Right lobe of liver (tissue), 6 donors: ENCODE measurements at regions of chr7 and their contacts with region 1.

Region 1: GRCh38 chr7:102390697-102391484 is 5.3 kb upstream of the PRKRIP1 start:
- DNase-seq: peak; percentile 84 to 87 (median 85)
- ATAC-seq: peak; percentile 94 to 98 (median 98)
- H3K4me3 ChIP-seq: no peak overlapping the region
- H3K27ac ChIP-seq: no peak overlapping the region
- H3K4me1 ChIP-seq: peaks cover 0 to 4% (median 0%) of the 10 kb centered on the region in 4 donors
- H3K27me3 ChIP-seq: no peaks in the 10 kb centered on the region
- CTCF ChIP-seq: peak; percentile 91 to 98 (median 93)
- POLR2A ChIP-seq: no peak

Region 2: DNA sequence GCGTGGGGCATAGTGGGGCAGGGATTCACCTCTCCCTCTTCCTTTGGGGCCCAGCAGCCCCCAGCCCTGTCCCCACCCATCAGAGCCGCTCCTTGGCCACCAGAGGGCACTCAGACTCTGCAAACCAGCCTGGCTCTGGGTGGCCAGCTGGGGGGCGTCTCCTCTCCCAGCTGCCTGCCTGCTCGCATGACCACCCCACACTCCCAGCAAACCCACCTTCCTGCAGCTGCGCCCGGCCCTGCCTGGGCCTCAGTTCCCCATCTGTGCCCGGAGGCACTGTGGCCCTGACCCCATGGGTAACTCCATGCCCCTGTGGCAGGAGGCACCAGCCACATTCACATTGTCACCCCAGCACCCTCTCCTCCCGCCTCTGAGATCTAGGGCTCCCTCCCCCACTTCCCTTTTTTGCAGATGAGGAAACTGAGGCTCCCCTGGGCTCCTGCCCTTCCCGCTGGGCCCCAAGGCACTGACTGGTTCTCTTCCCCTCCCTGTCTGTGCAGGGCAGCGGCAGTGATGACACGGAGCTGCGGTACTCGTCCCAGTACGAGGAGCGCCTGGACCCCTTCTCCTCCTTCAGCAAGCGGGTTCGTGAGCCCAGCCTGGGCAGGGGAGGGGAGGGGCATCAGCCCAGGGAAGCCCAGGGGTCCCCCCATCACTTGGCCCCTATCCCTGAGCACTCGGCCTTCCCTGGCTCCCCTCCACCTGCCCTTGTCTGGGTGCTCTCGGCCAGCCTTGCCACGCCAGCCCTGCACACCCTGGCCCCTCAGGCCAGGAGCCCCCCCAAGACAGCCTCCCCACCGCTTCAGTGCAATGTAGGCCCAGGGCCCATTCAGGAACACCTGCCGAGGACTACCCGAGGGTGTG is 111.1 kb before region 1 on chr7:
- intact Hi-C with region 1: loop called (anchors 5 kb)
- DNase-seq: peak in 1 of 3 donors; percentile 50
- ATAC-seq: peak; percentile 66 to 84 (median 80)
- H3K4me3 ChIP-seq: no peak overlapping the region
- H3K27ac ChIP-seq: no peak overlapping the region
- H3K4me1 ChIP-seq: no peaks in the 10 kb centered on the region
- H3K27me3 ChIP-seq: no peaks in the 10 kb centered on the region
- CTCF ChIP-seq: peak; percentile 68 to 82 (median 74)
- POLR2A ChIP-seq: no peak